Left ventricle myocardium superior (tissue), 1 donor: ENCODE measurements at regions of chr4 and their contacts with region 1.

Region 1: GRCh38 chr4:105146276-105147015 is at the start of gene TET2:
- DNase-seq: peak; percentile 90
- ATAC-seq: peak; percentile 88
- total RNA-seq, gene TET2: 15.4 TPM

Region 2: DNA sequence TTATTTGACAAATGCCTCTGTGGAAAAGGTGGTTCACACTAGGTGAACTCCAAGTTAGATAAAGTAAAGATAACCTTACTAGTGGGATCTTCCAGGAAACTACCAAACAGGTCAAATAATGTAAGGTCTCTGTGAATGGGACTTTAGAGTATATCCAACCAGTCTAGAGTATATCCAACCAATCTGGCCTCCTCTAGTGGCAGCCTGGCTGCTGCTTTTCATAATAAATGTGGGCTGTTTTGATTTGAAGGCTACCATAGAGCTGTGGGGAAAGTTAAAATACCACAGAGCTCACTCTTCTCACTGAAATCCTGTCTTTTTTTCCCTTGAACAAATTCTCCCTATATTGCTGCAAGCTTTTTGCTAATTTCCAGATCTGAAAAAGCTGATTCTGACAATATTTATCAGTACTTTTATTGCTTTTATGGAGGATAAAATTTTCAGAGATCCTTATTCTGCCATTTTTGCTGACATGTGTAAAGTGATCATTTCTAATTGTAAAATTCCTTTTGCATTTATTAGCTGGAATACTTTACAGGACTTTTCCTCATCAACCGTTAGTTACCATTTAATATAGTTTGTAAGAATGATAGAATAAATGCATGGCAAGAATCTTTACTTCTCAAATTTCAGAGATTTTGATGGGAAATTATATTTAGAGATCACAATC is 111.5 kb after region 1 on chr4:
- intact Hi-C with region 1: loop called (anchors 10 kb)
- DNase-seq: no peak
- ATAC-seq: no peak

Region 3: DNA sequence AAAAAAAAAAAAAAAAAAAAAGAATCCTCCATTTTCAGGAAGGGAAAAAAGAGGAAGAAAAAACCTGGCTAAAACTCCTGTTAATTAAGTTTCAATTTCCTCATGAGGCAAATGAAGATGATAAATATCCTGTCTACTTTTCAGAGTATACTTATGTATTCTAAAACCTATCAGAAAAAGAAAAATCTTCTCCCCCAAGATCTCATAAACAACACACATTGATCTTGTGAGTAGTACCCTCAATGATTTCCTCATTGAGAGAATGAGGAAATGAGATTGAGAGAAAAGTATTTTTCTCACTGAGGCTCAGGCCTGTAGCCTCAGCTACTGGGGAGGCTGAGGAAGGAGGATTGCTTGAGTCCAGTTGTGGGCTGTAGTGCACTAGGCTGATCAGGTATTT is 146.9 kb after region 1 on chr4:
- intact Hi-C with region 1: no loop called
- DNase-seq: no peak
- ATAC-seq: no peak